Activated CD4-positive, alpha-beta T cell treated with anti-CD3 and anti-CD28 coated beads, Interleukin-2, amount 10 ng/mL, durations not matched to agents 24 days and 14 days (primary cell): ENCODE measurements at regions of chr19 and their contacts with region 1.

Region 1: DNA sequence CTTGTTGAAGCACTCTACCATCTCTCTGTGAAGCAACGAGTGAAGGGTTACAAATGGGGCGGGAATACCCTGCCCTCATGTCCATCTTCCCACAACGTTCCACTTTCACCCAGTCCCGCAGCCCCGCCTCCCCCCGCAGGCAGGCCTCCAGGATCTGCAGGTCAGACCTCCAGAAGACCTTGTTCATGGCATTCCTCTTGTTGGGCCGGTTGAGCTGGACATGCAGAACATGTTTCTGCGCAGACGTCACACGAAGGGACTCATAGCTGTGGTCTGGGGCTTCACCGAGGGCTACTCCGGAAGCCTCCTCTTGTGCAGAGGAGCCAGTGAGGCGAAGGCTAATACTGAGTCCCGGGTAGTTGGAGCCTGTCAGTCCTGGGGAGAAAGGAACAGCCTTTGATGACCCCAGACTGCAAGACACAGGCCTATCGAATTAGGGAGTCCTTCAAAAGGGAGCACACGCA is 420 bp downstream of the ECH1 start:
- DNase-seq: peak; percentile 81
- H3K4me3 Mint-ChIP-seq: peak overlapping the region; percentile 99
- H3K27ac Mint-ChIP-seq: peak overlapping the region; percentile 93
- H3K4me1 Mint-ChIP-seq: peaks cover 20% of the 10 kb centered on the region
- H3K27me3 Mint-ChIP-seq: no peaks in the 10 kb centered on the region

Region 2: GRCh38 chr19:38640368-38640767 is 190.8 kb before region 1 on chr19:
- intact Hi-C with region 1: no loop called
- DNase-seq: no peak
- H3K4me3 Mint-ChIP-seq: no peak overlapping the region
- H3K27ac Mint-ChIP-seq: no peak overlapping the region
- H3K4me1 Mint-ChIP-seq: peaks cover 24% of the 10 kb centered on the region
- H3K27me3 Mint-ChIP-seq: no peaks in the 10 kb centered on the region

Region 3: GRCh38 chr19:38729653-38730469 is 101.3 kb before region 1 on chr19:
- intact Hi-C with region 1: loop called (anchors 5 kb)
- DNase-seq: peak; percentile 94
- H3K4me3 Mint-ChIP-seq: no peak overlapping the region
- H3K27ac Mint-ChIP-seq: peak overlapping the region; percentile 63
- H3K4me1 Mint-ChIP-seq: peaks cover 31% of the 10 kb centered on the region
- H3K27me3 Mint-ChIP-seq: no peaks in the 10 kb centered on the region

Region 4: DNA sequence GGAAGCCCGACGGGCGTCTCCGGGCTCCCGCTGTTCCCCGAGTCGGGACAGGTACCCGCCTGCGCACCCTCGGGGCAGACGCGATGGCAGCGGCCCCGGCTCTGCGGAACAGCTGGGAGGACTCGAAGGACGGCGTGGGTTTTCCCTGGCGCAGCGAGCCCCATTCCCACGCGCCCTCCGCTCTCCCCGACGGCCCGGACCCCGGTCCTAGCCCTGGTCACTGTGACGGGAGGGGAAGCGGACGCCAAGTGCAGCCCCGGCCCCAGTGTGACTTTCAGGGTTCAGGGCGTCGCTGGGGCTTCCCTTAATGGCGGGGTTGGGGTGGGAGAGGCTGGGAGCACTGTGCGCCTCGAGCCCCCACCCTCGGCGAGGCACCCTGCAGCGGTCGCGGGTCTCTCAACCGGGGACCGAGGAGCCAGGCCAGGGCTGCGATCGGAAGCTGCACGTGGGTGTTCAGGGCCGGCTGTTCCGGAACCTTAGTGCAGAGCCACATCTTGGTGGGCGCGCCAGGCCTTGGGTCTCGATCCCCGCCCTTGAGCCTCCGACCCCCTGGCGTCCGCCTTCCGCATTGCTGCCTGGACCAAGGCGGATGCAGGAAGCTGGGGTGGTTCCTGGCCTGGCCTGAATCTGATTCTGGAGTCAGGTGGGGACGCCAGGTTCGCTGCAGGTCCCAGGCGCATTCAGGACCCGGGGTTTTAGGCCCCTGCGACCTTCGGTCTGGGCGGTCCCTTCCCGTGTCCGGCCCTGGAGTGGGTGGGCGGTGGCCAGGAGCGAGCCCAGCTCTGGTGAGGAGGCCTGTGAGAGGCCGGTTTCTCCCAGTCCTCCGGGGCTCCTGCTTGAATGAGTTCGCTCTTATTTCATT is 38.7 kb before region 1 on chr19:
- intact Hi-C with region 1: no loop called
- DNase-seq: peak; percentile 76
- H3K4me3 Mint-ChIP-seq: peak overlapping the region; percentile 21
- H3K27ac Mint-ChIP-seq: no peak overlapping the region
- H3K4me1 Mint-ChIP-seq: peaks cover 4% of the 10 kb centered on the region
- H3K27me3 Mint-ChIP-seq: peaks cover 9% of the 10 kb centered on the region

Region 5: GRCh38 chr19:38842439-38843174 is 11.4 kb after region 1 on chr19:
- intact Hi-C with region 1: loop called (anchors 1 kb)
- DNase-seq: peak; percentile 91
- H3K4me3 Mint-ChIP-seq: peak overlapping the region; percentile 82
- H3K27ac Mint-ChIP-seq: peak overlapping the region; percentile 95
- H3K4me1 Mint-ChIP-seq: peaks cover 60% of the 10 kb centered on the region
- H3K27me3 Mint-ChIP-seq: no peaks in the 10 kb centered on the region

Region 6: DNA sequence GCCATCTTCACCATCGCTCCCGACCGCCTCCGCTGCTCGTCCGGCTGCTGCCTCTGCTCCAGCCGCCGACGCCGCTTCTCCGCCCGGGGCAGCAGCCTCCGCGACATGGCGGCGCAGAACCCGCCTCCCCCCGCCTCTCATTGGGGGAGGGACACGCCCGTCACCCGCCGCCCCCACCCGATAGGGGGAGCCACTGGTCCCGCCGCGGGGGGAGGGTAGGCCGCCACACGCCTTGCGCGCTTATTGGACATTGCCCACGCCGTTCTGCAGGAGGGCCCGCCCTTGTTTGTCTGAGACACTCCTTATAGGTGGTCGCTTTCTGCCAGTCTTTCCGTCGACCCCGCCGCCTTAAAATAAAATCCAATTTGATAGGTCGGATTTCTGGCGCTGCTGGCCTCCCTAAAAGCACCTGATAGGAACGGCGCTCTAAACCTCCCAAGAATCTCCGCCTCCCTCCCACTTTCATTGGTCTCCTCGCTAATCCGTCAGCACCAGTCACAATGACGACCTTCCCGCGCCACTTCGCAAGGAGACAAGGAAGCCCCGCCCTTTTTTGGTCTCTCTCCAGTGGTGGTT is 18.8 kb after region 1 on chr19 and contains the start of gene HNRNPL:
- intact Hi-C with region 1: loop called (anchors 1 kb)
- DNase-seq: peak; percentile 100
- H3K4me3 Mint-ChIP-seq: peak within 1 kb of the TSS; percentile 98
- H3K27ac Mint-ChIP-seq: peak within 1 kb of the TSS; percentile 100
- H3K4me1 Mint-ChIP-seq: peaks cover 39% of the 10 kb centered on the region
- H3K27me3 Mint-ChIP-seq: no peaks in the 10 kb centered on the region
- total RNA-seq, gene HNRNPL: 686 and 695 TPM in 2 replicates

Region 7: DNA sequence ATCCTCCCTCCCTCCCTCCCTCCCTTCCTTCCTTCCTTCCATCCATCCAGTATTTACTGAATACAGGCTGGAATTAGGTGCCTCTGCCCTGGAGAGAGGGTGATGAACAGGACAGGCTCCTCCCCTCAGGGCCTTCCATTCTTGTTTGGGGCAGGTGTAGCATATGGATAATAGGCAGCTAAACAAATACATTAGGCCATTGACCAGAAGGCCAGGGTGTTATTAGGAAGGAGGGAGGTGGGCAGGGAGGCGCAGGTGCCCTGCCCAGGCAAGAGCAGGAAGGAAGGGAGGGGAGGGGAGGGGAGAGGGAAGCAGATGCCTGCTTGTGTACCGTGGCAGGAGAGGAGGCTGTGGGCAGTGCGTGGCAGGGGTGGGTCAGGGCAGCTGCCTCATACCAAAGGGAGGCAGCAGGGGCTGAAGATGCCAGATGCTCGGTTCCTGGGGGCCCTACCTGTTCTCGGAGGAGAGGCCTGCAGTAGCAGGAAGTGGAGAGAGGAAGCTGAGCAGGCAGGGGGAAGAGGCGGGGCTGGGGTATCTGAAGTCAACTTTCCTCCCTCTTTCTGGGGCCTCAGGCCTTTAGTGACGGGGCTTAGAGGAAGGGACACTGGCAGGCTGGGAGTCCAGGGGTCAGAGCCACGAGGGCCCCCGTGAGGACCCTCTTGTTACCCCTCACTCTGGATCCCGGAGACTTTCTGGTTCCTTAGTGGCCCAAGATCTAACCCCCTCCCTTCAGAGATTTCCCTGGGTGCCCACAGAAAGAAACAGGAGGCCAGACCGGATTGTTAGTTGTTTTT is 46.8 kb after region 1 on chr19 and contains the start of gene RINL:
- intact Hi-C with region 1: loop called (anchors 5 kb)
- DNase-seq: peak; percentile 90
- H3K4me3 Mint-ChIP-seq: peak within 1 kb of the TSS; percentile 97
- H3K27ac Mint-ChIP-seq: peak within 1 kb of the TSS; percentile 96
- H3K4me1 Mint-ChIP-seq: peaks cover 28% of the 10 kb centered on the region
- H3K27me3 Mint-ChIP-seq: no peaks in the 10 kb centered on the region
- total RNA-seq, gene RINL: 62.7 and 68.9 TPM in 2 replicates